ENCODE measurements at regions of chr2 and their contacts with region 1.

Region 1: GRCh38 chr2:233711312-233712008 is 1.2 kb upstream of the UGT1A5 start:
- DNase-seq: peak; percentile 44 to 73 (median 58)
- ATAC-seq: peak; percentile 62
- H3K4me3 ChIP-seq: no peak overlapping the region
- H3K4me3 Mint-ChIP-seq: no peak overlapping the region
- H3K27ac ChIP-seq: no peak overlapping the region
- H3K27ac Mint-ChIP-seq: no peak overlapping the region
- H3K4me1 ChIP-seq: no peaks in the 10 kb centered on the region
- H3K4me1 Mint-ChIP-seq: no peaks in the 10 kb centered on the region
- H3K27me3 ChIP-seq: peaks cover 4 to 6% of the 10 kb centered on the region in 2 experiments
- H3K27me3 Mint-ChIP-seq: peaks cover 29% of the 10 kb centered on the region
- CTCF ChIP-seq: peak; percentile 78

Region 2: DNA sequence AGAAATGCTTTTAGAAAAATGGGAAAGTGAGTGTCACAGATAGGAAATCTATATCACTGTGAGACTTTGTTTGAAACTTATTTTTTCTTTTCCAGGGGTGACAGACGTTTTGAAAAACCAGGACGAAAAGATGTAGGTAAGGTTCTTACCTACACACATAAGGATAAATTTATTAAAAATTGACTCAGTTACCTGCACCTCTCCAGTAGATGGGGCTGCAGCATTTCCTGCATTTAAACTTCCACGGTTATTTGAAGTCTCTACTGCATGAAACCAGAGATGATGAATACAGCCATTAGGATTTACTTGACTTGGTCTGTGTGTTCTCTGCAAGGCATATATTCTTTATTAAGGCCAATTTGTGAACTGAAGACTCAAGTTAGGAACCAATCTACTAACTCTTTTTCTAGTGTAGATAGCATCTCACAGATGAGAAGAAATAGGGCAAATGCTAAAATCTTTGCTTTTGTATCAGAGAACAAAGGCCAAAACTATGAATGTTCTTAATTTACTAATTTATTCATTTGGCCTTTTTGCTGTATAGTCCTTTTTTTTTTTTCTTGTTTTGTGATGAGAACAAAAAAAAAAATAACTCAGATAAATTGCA is 950.1 kb before region 1 on chr2:
- CTCF ChIA-PET with region 1: no interaction called
- POLR2A ChIA-PET with region 1: no interaction called
- intact Hi-C with region 1: loop called in 1 of 2 experiments (anchors 5 kb)
- DNase-seq: peak in 10 of 14 experiments; percentile 3 to 65 (median 30)
- ATAC-seq: peak; percentile 76
- H3K4me3 ChIP-seq: no peak overlapping the region
- H3K4me3 Mint-ChIP-seq: no peak overlapping the region
- H3K27ac ChIP-seq: no peak overlapping the region
- H3K27ac Mint-ChIP-seq: no peak overlapping the region
- H3K4me1 ChIP-seq: peaks cover 4% of the 10 kb centered on the region
- H3K4me1 Mint-ChIP-seq: peaks cover 19% of the 10 kb centered on the region
- H3K27me3 ChIP-seq: no peaks in the 10 kb centered on the region
- H3K27me3 Mint-ChIP-seq: no peaks in the 10 kb centered on the region
- CTCF ChIP-seq: peak; percentile 62

Region 3: GRCh38 chr2:232854082-232854481 is 857.4 kb before region 1 on chr2:
- CTCF ChIA-PET with region 1: no interaction called
- POLR2A ChIA-PET with region 1: no interaction called
- intact Hi-C with region 1: loop called in 1 of 2 experiments (anchors 5 kb)
- DNase-seq: no peak
- ATAC-seq: no peak
- H3K4me3 ChIP-seq: no peak overlapping the region
- H3K4me3 Mint-ChIP-seq: no peak overlapping the region
- H3K27ac ChIP-seq: no peak overlapping the region
- H3K27ac Mint-ChIP-seq: peak overlapping the region; percentile 25
- H3K4me1 ChIP-seq: no peaks in the 10 kb centered on the region
- H3K4me1 Mint-ChIP-seq: no peaks in the 10 kb centered on the region
- H3K27me3 ChIP-seq: no peaks in the 10 kb centered on the region
- H3K27me3 Mint-ChIP-seq: no peaks in the 10 kb centered on the region
- CTCF ChIP-seq: no peak